Heart right ventricle (tissue), 16 donors: ENCODE measurements at regions of chr6 and their contacts with region 1.

Region 1: GRCh38 chr6:46090115-46091079 is 39.4 kb upstream of the ENPP4 start:
- DNase-seq: peak; percentile 37 to 60
- ATAC-seq: peak in 7 of 8 donors; percentile 59 to 82 (median 69)
- H3K4me3 ChIP-seq: no peak overlapping the region
- H3K27ac ChIP-seq: no peak overlapping the region
- H3K4me1 ChIP-seq: peaks cover 0 to 7% (median 0%) of the 10 kb centered on the region in 9 donors
- H3K27me3 ChIP-seq: no peaks in the 10 kb centered on the region
- CTCF ChIP-seq: peak; percentile 60 to 91 (median 84)

Region 2: GRCh38 chr6:45930420-45931040 is 159.9 kb before region 1 on chr6:
- intact Hi-C with region 1: loop called in 3 of 10 experiments (anchors 2 to 5 kb)
- DNase-seq: peak; percentile 56 to 73
- ATAC-seq: peak; percentile 60 to 83 (median 80)
- H3K4me3 ChIP-seq: no peak overlapping the region
- H3K27ac ChIP-seq: peak overlapping the region in 6 of 10 donors; percentile 2 to 62 (median 45)
- H3K4me1 ChIP-seq: peaks cover 0 to 69% (median 21%) of the 10 kb centered on the region in 9 donors
- H3K27me3 ChIP-seq: no peaks in the 10 kb centered on the region
- CTCF ChIP-seq: peak; percentile 92 to 98 (median 97)

Region 3: DNA sequence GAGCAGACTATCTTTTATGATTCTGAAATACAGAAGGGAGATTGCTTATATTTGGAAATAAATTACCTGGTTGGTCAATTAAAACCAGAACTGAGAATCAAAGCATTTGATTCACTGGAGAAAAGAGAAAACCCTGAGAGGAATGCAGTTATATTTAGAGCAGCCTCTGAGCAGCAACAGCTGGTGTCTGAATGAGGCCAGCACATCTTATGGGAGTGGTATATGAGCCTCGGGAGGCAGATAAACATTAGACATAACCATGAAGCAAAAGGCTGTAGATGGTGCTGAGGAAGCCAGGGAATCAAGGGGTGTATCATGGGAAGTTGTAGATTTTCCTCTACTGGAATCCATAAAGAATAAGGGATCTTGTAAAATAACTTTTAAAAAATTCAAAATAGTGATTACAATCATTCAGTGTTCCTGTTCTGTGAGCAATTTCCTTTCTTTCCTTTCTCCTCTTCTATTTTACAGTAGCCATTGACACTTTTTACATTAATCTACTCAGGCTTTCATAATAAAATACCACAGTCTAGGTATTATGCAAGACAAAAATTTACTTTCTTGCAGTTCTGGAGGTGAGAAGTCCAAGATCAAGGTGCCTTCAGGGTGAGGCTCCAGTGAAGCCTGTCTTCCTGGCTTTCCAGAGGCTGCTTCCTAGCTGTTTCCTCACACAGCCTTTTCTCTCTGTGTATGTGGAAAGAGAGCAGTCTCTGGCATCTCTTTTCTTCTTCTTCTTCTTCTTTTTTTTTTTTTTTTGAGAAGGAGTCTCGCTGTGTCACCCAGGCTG is 113.2 kb after region 1 on chr6:
- intact Hi-C with region 1: loop called in 6 of 10 experiments (anchors 2 to 10 kb)
- DNase-seq: no peak
- ATAC-seq: no peak
- H3K4me3 ChIP-seq: no peak overlapping the region
- H3K27ac ChIP-seq: no peak overlapping the region
- H3K4me1 ChIP-seq: peaks cover 0 to 8% (median 0%) of the 10 kb centered on the region in 9 donors
- H3K27me3 ChIP-seq: no peaks in the 10 kb centered on the region
- CTCF ChIP-seq: no peak

Region 4: DNA sequence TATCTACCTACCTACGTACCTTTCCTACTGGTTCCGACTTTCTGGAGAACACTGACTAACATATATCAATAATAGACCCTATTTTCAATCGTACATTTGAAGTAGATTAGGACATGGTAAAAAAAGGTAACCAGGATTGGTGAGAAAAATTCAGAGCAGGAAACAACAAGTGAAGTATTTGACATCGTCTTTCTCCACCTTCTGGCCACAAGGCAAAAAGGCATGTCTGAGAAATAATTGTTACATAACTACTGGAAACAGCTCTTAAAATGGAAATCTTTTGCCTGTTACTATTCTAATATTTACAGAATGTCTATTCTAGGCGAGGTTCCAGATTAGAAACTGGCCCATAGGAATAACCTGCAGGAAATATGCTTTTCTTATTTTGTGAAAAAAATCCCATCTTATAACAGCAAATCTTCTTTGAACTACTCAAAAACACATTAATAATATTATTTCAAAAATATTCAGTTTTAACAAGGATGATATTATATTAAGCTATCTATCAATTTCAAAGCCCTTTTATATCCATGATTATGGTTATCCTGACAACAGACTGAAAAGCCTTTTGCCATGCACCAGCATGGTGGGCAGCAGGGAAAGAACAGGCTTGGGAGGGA is 320.0 kb after region 1 on chr6:
- intact Hi-C with region 1: loop called in 8 of 10 experiments (anchors 1 to 5 kb)
- DNase-seq: peak in 1 of 2 donors; percentile 37
- ATAC-seq: peak in 7 of 8 donors; percentile 19 to 53 (median 41)
- H3K4me3 ChIP-seq: no peak overlapping the region
- H3K27ac ChIP-seq: peak overlapping the region in 6 of 10 donors; percentile 24 to 62 (median 52)
- H3K4me1 ChIP-seq: peaks cover 2 to 84% (median 58%) of the 10 kb centered on the region in 9 donors
- H3K27me3 ChIP-seq: no peaks in the 10 kb centered on the region
- CTCF ChIP-seq: peak; percentile 47 to 88 (median 84)

Region 5: DNA sequence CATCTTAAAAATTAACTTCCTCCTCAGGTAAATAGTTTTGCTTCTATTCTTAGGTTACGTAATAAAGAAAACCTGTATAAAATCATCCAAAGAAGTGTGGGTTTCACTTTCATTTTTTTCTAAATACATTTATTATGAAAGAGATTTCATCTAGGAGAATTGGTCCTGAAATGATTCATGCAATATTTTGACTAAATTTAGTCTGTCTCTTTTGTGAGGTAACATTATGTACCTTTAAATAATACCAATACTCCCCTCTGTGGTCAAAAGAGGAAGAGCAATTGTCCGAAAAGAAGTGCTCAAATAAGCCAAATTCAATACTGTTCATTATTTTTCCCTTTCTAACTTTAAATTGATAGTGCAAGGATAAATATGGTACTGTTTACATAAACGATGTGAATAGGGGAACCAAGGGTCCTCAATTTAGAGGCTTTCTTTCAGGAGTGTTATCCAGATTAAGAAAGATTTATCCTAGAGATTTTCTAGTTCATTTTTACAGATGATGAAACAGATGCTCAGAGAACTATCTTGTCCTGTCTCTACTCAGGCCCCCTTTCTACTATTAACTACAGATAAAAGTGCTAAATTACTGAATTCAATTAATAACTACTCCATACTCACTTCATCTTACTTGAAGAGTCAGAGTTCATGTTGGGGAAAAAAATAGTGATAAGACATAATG is 536.0 kb after region 1 on chr6:
- intact Hi-C with region 1: loop called in 4 of 10 experiments (anchors 10 kb)
- DNase-seq: peak in 1 of 2 donors; percentile 23
- ATAC-seq: peak in 4 of 8 donors; percentile 43 to 69 (median 56)
- H3K4me3 ChIP-seq: no peak overlapping the region
- H3K27ac ChIP-seq: peak overlapping the region in 1 of 10 donors; percentile 1
- H3K4me1 ChIP-seq: peaks cover 0 to 18% (median 8%) of the 10 kb centered on the region in 9 donors
- H3K27me3 ChIP-seq: no peaks in the 10 kb centered on the region
- CTCF ChIP-seq: peak; percentile 24 to 83 (median 65)

Region 6: DNA sequence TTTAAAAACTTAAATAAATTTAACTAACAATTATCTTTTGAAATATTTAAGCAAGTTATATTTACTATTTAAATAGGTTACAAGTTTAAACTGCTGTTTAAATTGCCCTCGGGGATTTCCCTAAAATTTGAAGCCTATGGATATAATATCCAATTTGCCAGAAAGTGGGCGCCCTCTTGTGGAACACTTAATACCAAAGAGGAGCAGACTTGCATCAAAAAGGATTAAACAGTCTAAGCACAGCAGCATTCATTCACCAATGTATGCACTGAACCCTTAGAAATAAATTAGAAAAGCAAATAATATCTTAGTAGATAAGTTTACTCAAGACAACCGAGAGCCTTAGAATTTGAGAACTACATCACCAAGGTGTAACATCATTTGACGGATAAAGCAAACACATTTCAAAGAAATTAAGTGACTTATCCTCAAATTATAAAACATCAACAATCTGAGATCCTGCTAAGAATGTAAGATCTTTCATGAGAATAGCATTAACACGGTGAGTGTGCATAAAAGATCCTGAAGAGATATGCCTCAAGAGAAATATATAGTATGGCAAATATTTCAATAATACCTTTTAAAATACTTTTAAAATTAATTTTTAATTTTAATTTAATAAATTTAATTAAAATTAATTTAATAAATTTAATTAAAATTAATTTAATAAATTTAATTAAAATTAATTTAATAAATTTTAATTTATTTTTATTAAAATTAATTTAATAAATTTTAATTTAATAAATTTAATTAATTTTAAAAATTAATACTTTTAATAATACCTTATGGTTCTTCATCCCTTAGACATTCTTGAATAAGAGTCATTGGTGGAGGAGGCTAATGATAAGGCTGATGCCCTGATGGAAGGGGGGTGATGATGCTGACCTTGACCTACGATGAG is 691.3 kb after region 1 on chr6:
- intact Hi-C with region 1: loop called in 1 of 10 experiments (anchors 10 kb)
- DNase-seq: peak in 1 of 2 donors; percentile 63
- ATAC-seq: no peak
- H3K4me3 ChIP-seq: no peak overlapping the region
- H3K27ac ChIP-seq: no peak overlapping the region
- H3K4me1 ChIP-seq: no peaks in the 10 kb centered on the region
- H3K27me3 ChIP-seq: no peaks in the 10 kb centered on the region
- CTCF ChIP-seq: peak; percentile 43 to 81 (median 71)